Sigmoid colon (tissue), 7 donors: ENCODE measurements at regions of chr18 and their contacts with region 1.

Region 1: DNA sequence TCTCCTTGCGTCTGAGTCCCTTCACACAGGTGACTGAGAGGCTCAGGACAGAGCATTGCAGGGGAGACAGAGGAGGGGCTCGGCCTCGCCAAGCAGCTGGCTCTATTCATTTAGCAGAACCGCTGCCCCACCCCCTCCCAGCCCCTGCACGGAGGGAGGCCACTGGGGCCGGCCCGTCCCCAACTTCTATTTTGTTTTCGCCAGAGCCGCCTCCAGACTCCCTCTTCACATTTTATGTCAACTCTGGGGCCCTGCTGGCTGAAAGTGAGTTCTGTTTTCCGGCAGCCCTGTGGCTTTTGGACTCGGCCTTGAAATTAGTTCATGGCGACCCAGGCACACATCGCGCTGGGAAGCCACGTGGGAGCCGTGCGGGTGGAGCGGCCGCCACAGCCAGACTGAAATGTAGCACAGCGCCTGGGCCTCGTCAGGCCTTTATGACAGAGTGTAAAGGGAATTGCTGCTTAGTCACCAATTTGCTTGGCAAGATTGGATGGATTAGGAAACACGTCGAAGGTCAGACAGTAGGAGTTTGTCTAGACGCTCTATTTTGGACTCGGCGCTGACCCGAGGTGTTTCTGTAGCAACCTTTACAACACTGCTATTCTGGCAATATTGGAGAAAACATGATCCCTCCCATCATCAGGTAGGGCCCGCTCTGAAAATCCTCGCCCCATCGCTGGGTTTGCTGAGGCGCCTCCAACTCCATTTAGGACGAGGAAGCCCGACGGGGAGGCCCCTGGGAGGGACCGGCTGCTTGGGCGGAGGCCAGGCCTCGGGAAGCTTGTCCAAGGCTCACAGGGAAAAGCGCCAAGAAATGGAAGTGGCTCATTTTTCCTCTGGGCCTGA is 90.7 kb upstream of the CTDP1 start:
- DNase-seq: peak; percentile 97
- H3K4me3 ChIP-seq: no peak overlapping the region
- H3K27ac ChIP-seq: peak overlapping the region; percentile 69 to 85 (median 80)
- H3K4me1 ChIP-seq: peaks cover 0 to 40% (median 36%) of the 10 kb centered on the region in 4 donors
- H3K27me3 ChIP-seq: no peaks in the 10 kb centered on the region
- CTCF ChIP-seq: no peak
- EP300 ChIP-seq: peak in 2 of 4 donors; percentile 43 to 65
- POLR2A ChIP-seq: no peak

Region 2: GRCh38 chr18:79393635-79394533 is 195.0 kb before region 1 on chr18:
- intact Hi-C with region 1: loop called (anchors 5 kb)
- DNase-seq: peak; percentile 97
- H3K4me3 ChIP-seq: peak overlapping the region; percentile 40 to 82 (median 64)
- H3K27ac ChIP-seq: peak overlapping the region; percentile 95 to 98 (median 96)
- H3K4me1 ChIP-seq: peaks cover 0 to 38% (median 32%) of the 10 kb centered on the region in 4 donors
- H3K27me3 ChIP-seq: no peaks in the 10 kb centered on the region
- CTCF ChIP-seq: no peak
- EP300 ChIP-seq: peak in 1 of 4 donors; percentile 59
- POLR2A ChIP-seq: no peak